IMR-90 (cell line): ENCODE measurements at regions of chr7 and their contacts with region 1.

Region 1: DNA sequence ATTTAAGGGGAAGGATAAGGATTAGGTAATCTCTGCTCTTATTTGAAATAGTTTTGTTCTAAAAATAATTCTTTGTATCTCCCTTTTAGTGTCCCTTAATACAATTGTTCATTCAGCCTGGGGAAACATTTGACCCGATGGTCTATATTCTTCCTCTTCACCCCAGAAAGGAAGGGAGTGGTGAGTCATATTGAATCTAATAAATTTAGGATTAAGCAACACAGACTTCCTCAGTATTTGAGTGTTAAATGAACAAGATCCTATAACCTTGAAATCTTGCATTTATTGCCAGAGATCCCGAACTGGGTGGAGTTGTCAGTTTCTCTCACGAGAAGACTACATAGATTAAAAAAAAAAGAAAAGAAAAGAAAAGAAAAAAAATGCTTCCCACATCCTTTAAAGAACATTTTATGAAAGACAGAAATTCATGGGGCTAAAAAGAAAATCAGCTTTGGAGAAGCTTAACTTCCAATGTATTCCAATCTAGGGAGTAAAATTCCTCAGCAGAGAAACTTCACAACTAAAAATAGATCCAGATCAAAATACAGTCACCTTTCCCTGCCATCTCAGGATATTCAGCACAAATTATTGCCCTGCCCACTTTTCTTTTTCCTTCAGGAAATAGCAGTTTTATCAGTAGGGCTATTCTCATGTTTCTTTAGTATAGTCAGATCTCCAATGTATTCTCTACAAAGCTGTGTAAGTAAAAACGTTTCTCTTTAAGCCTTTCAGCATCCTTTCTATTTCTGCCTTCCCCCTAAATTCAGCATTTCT is 82.2 kb downstream of the SEMA3D start:
- DNase-seq: peak; percentile 33
- ATAC-seq: no peak
- H3K4me3 ChIP-seq: no peak overlapping the region
- H3K27ac ChIP-seq: no peak overlapping the region
- H3K4me1 ChIP-seq: no peaks in the 10 kb centered on the region
- H3K27me3 ChIP-seq: no peaks in the 10 kb centered on the region
- CTCF ChIP-seq: no peak
- POLR2A ChIP-seq: no peak
- RAD21 ChIP-seq: no peak

Region 2: GRCh38 chr7:84568781-84569180 is 535.8 kb before region 1 on chr7:
- CTCF ChIA-PET with region 1: no interaction called
- POLR2A ChIA-PET with region 1: no interaction called
- dilution Hi-C with region 1: no loop called
- in situ Hi-C with region 1: no loop called
- intact Hi-C with region 1: no loop called
- DNase-seq: no peak
- ATAC-seq: no peak
- H3K4me3 ChIP-seq: no peak overlapping the region
- H3K27ac ChIP-seq: no peak overlapping the region
- H3K4me1 ChIP-seq: no peaks in the 10 kb centered on the region
- H3K27me3 ChIP-seq: no peaks in the 10 kb centered on the region
- CTCF ChIP-seq: no peak
- POLR2A ChIP-seq: no peak
- RAD21 ChIP-seq: no peak

Region 3: GRCh38 chr7:85150624-85151023 is 46.0 kb after region 1 on chr7:
- CTCF ChIA-PET with region 1: no interaction called
- POLR2A ChIA-PET with region 1: no interaction called
- dilution Hi-C with region 1: no loop called
- in situ Hi-C with region 1: no loop called
- intact Hi-C with region 1: loop called (anchors 2 kb)
- DNase-seq: no peak
- ATAC-seq: no peak
- H3K4me3 ChIP-seq: no peak overlapping the region
- H3K27ac ChIP-seq: no peak overlapping the region
- H3K4me1 ChIP-seq: no peaks in the 10 kb centered on the region
- H3K27me3 ChIP-seq: no peaks in the 10 kb centered on the region
- CTCF ChIP-seq: no peak
- POLR2A ChIP-seq: no peak
- RAD21 ChIP-seq: no peak

Region 4: DNA sequence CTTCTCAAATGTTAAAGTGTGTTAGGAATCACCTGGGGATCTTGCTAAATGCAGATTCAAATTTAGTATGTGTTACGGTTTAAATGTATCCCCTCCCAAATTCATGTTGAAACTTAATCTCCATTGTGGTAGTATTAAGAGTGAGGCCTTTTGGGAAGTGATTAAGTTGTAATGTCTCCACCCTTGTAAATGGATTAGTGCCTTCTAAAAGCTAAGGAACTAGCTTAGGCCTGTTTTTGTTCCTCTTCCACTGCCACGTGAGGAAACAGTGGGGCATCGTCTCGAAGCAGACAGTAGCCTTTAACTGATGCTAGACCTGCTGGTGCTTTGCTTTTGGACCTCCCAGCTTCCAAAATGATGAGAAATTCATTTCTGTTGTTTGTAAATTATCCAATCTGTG is 134.5 kb after region 1 on chr7:
- CTCF ChIA-PET with region 1: no interaction called
- POLR2A ChIA-PET with region 1: no interaction called
- dilution Hi-C with region 1: no loop called
- in situ Hi-C with region 1: no loop called
- intact Hi-C with region 1: no loop called
- DNase-seq: no peak
- ATAC-seq: no peak
- H3K4me3 ChIP-seq: no peak overlapping the region
- H3K27ac ChIP-seq: no peak overlapping the region
- H3K4me1 ChIP-seq: no peaks in the 10 kb centered on the region
- H3K27me3 ChIP-seq: no peaks in the 10 kb centered on the region
- CTCF ChIP-seq: no peak
- POLR2A ChIP-seq: no peak
- RAD21 ChIP-seq: no peak

Region 5: DNA sequence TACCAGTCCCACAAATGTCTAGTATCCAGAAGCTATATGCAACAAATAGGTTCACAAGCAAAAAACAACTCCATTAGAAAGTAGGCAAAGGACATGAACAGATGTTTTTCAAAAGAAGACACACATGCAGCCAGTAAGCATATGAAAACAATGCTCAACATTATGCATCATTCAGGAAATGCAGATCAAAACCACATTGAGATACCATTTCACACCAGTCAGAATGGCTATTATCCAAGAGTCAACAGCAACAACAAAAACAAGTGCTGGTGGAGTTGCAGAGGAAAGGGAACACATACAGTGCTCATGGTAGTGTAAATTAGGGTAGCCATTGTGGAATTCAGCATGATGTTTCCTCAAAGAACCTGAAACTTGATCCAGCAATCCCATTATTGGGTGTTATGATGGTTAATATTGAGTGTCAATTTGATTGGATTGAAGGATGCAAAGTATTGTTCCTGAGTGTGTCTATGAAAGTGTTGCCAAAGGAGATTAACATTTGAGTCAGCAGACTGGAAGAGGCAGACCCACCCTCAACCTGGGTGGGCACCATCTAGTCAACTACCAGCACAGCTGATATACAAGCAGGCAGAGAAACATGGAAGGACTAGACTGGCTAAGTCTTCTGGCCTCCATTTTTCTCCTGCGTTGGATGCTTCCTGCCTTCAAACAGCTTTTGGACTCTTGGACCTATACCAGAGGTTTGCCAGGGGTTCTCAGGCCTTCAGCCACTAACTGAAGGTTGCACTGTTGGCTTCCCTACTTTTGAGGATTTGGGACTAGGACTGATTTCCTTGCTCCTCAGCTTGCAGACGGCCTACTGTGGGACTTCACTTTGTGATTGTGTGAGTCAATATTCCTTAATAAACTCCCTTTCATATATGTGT is 300.6 kb after region 1 on chr7:
- CTCF ChIA-PET with region 1: no interaction called
- POLR2A ChIA-PET with region 1: no interaction called
- dilution Hi-C with region 1: no loop called
- in situ Hi-C with region 1: no loop called
- intact Hi-C with region 1: loop called (anchors 10 kb)
- DNase-seq: no peak
- ATAC-seq: no peak
- H3K4me3 ChIP-seq: no peak overlapping the region
- H3K27ac ChIP-seq: no peak overlapping the region
- H3K4me1 ChIP-seq: no peaks in the 10 kb centered on the region
- H3K27me3 ChIP-seq: no peaks in the 10 kb centered on the region
- CTCF ChIP-seq: no peak
- POLR2A ChIP-seq: no peak
- RAD21 ChIP-seq: no peak